ENCODE measurements at regions of chr12 and their contacts with region 1.

Region 1: DNA sequence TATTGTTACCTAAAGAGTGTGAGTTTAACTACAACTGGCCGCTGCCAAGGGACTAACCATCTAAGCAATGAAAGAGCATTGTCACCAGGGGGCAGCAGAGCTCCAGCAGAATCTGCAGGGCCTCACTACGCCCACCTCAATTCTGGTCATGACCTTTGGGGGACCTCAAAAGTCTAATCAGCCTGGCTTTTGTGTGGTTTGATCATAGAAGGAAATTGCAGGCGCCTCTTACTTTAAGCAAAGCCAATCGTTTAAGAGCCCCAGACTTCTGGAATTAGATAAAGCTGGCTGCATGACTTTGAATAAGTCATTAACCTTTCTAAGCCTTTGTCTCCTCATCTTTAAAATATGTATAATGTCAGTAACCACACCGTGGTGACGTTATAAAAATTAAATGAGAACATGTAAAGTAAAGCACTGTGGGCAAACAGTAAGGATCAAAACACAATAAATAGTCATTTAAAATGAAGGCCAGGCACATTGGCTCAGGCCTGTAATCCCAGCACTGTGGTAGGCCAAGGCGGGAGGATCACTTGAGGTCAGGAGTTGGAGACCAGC is 58.6 kb downstream of the TBX3 start:
- DNase-seq: peak; percentile 43 to 88
- H3K4me3 ChIP-seq: no peak overlapping the region
- H3K27ac ChIP-seq: no peak overlapping the region
- H3K4me1 ChIP-seq: no peaks in the 10 kb centered on the region
- H3K27me3 ChIP-seq: no peaks in the 10 kb centered on the region
- CTCF ChIP-seq: peak; percentile 84 to 92 (median 86)
- EP300 ChIP-seq: no peak
- POLR2A ChIP-seq: no peak
- RAD21 ChIP-seq: peak; percentile 95 to 99

Region 2: DNA sequence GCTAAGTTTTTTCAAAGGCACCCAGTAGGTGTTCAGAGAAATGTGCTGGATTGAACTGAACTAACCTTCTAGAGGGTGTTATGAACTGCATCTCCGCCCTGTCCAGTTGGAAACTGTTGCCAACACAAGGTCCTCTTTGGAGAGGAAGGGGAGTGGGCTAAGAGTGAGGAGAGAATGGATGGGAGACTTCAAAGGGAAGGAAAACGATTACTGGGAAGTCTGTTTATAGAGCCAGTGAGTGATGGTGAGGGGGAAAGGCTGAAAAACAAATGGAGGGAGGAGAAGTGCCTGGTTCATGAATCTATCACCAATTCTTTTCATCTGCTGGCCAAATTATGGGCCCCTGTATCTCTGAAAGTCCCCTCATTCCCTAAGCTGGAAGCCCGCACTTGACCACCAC is 133.5 kb before region 1 on chr12:
- CTCF ChIA-PET with region 1: no interaction called
- POLR2A ChIA-PET with region 1: no interaction called
- DNase-seq: no peak
- H3K4me3 ChIP-seq: no peak overlapping the region
- H3K27ac ChIP-seq: no peak overlapping the region
- H3K4me1 ChIP-seq: no peaks in the 10 kb centered on the region
- H3K27me3 ChIP-seq: peaks cover 0 to 3% (median 1%) of the 10 kb centered on the region in 4 experiments; a peak in 2 of 7 replicates
- CTCF ChIP-seq: no peak
- EP300 ChIP-seq: no peak
- POLR2A ChIP-seq: no peak
- RAD21 ChIP-seq: no peak

Region 3: GRCh38 chr12:114636723-114637483 is 11.5 kb after region 1 on chr12:
- CTCF ChIA-PET with region 1: interaction called, 53 read pairs
- POLR2A ChIA-PET with region 1: no interaction called
- DNase-seq: no peak
- H3K4me3 ChIP-seq: no peak overlapping the region
- H3K27ac ChIP-seq: no peak overlapping the region
- H3K4me1 ChIP-seq: peaks cover 2 to 16% (median 6%) of the 10 kb centered on the region in 4 experiments; a peak in 5 of 7 replicates
- H3K27me3 ChIP-seq: peaks cover 0 to 3% (median under 1%) of the 10 kb centered on the region in 4 experiments; a peak in 2 of 7 replicates
- CTCF ChIP-seq: peak; percentile 29 to 47 (median 36); a peak in 3 of 4 replicates
- EP300 ChIP-seq: no peak
- POLR2A ChIP-seq: no peak
- RAD21 ChIP-seq: peak; percentile 28 to 44; a peak in 3 of 4 replicates

Region 4: DNA sequence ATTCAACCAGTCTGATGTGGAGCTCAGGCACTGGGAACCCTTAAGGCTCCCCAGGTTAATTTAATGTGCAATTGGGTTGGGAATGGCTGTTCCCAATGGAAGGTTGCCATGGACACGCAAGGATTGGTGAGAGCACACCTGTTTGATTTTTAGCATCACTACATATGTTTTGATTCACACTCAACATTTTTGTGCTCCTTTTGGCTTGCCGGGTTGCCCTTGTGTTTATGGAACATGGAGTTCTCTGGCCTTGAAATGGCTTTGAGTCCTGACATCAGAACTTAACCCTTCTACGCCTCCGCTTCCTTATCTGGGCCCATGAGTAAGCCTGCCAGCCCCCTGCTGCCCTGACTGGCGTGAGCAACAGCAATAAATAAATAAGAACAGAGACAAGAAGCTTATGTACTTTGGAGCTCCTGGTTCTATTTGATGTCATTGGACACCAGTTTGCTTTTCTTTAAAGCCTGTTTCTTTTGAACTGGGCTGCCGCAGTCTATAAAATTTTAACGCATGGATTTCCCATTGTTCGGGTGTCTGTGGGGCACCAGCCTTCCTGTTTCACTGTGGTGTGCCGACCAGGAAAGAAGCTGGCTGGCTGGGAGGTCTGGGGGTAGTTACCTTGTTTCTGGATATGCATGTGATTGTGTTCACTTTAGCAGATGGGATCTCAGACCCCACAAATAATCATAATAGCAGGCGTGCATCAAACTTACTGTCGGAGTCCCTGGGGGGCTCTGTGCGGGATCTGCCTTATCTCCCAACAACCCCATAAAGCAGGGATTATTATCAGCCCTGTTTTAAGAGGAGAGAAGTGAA is 30.8 kb after region 1 on chr12:
- CTCF ChIA-PET with region 1: interaction called, 27 read pairs
- POLR2A ChIA-PET with region 1: no interaction called
- DNase-seq: no peak
- H3K4me3 ChIP-seq: no peak overlapping the region
- H3K27ac ChIP-seq: no peak overlapping the region
- H3K4me1 ChIP-seq: peaks cover 5 to 19% (median 12%) of the 10 kb centered on the region in 4 experiments
- H3K27me3 ChIP-seq: peaks cover 0 to 3% (median 2%) of the 10 kb centered on the region in 4 experiments; a peak in 2 of 7 replicates
- CTCF ChIP-seq: no peak
- EP300 ChIP-seq: no peak
- POLR2A ChIP-seq: no peak
- RAD21 ChIP-seq: no peak

Region 5: DNA sequence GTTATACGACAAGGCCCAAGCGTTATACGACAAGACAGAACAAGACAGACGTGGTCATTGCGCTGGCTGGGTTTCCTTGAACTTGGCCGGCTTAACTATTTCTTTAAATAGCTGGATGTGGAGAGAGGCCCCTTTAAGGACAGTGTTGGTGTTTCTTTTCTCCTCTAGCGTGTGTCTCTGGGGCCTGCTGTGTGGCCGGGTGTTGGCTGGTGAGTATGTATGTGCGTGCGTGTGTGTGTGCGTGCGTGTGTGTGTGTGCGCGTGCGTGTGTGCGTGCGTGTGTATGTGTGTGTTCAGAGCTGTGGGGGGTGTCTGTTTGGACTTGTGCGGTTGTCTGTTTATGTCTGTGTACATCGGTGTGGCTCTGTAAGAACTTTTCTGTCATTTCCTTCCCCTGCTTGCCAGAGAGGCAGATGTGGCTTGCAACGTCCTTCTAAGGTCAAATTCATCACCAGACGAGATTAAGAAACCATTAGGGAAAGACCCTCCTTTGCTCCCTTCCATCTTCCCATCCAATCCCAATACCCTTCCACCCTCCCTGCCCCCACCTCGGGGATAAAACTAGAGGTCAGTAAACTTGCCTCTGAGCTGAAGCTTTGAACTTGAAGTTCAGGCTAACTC is 137.2 kb after region 1 on chr12:
- CTCF ChIA-PET with region 1: no interaction called
- POLR2A ChIA-PET with region 1: no interaction called
- DNase-seq: no peak
- H3K4me3 ChIP-seq: no peak overlapping the region
- H3K27ac ChIP-seq: no peak overlapping the region
- H3K4me1 ChIP-seq: peaks cover 0 to 4% (median 0%) of the 10 kb centered on the region in 4 experiments; a peak in 1 of 7 replicates
- H3K27me3 ChIP-seq: no peaks in the 10 kb centered on the region
- CTCF ChIP-seq: no peak
- EP300 ChIP-seq: no peak
- POLR2A ChIP-seq: no peak
- RAD21 ChIP-seq: no peak

Region 6: DNA sequence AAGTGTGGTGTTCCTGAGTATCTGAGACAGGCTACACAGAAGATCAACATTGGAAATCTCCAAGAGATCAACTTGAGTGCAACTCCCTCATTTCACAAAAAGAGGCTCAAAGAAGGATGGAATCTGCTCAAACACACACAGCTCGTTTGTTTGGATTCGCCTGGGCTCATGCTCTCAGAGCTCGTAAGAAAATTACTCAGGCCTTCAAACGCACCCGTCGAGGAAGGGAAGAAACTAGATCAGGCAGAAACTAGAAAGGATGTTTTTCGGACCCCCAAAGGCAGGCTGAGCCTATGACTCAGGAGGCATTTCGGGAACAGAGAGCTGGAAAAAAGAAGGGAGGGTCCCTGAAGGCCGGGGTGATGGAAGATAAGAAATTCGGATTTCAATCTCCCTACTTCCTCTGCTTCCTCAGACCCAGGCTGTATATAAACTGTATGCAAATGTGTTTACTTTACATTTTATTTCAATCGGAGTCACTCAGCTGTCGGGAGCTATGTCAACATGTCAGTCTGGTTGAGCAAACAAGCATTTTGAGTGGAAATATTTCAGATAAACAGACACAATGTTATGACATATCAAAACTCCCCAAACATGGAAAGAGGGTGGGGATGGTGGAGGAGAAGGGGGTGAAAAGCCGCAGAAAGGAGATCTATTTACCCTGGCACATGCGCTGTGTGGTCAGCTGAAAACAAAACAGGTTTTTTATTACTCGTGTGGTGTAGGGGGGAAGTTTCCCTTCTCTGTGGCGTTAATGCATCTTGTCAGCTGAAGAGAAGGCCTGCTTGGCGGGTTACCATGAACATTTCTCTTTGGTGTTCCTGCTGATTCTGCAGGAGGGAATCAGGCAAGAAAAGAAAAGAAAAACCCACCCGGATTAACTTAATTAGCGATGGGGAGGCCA is 187.7 kb after region 1 on chr12:
- CTCF ChIA-PET with region 1: no interaction called
- POLR2A ChIA-PET with region 1: no interaction called
- DNase-seq: no peak
- H3K4me3 ChIP-seq: peak overlapping the region in 1 of 4 experiments; percentile 10; a peak in 1 of 8 replicates
- H3K27ac ChIP-seq: no peak overlapping the region
- H3K4me1 ChIP-seq: peaks cover 0 to 8% (median 3%) of the 10 kb centered on the region in 4 experiments; a peak in 4 of 7 replicates
- H3K27me3 ChIP-seq: no peaks in the 10 kb centered on the region
- CTCF ChIP-seq: no peak
- EP300 ChIP-seq: no peak
- POLR2A ChIP-seq: no peak
- RAD21 ChIP-seq: no peak

Measured in H1 (cell line).